Natural killer cell (primary cell): ENCODE measurements at regions of chr12 and their contacts with region 1.

Region 1: DNA sequence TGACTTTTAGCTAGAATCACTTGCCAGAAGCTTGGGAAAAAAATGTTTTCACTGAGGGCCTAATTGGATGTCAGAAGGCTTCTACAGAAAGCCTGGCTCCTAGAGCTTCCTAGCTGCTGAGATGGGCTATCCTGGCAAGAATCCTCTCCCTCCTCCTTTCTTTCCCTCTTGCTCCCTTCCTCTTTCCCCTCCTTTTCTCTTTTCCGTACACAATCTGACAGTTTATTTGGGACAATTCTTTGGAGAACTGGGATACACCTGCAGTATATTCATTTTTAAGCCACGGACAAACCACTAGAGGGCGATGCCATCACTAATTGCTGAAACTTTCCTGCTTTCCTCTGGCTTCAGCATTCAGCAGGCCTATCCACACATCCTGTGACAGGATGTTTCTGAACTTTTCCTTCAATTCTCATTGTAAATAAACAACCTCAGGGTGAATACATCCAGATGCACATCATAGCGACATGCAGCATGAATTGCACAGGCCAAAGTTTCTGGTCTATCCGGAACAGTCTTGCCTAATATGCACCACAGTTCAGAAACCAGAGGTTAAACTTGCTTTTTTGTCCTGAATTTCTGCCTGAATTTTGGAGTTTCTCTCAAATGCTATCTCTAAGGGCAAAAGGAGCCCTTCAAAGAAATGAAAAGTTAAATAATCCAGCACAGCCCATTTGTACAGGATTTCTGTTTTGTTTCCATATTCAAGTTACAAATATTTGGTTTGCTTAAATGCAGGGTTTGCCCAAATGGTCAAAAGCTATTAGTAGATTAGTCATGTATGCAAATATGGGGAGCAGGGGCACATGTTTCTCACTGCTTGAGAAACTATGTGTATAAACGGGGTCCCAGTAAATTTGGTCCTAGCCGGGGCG is 142.8 kb downstream of the PAWR start:
- DNase-seq: peak in 1 of 2 donors; percentile 36
- ATAC-seq: no peak
- H3K4me3 ChIP-seq: no peak overlapping the region
- H3K4me3 Mint-ChIP-seq: no peak overlapping the region
- H3K27ac ChIP-seq: no peak overlapping the region
- H3K27ac Mint-ChIP-seq: no peak overlapping the region
- H3K4me1 ChIP-seq: no peaks in the 10 kb centered on the region
- H3K4me1 Mint-ChIP-seq: no peaks in the 10 kb centered on the region
- H3K27me3 ChIP-seq: no peaks in the 10 kb centered on the region
- H3K27me3 Mint-ChIP-seq: peaks cover 0 to 2% of the 10 kb centered on the region in 2 donors
- CTCF ChIP-seq: peak; percentile 50

Region 2: DNA sequence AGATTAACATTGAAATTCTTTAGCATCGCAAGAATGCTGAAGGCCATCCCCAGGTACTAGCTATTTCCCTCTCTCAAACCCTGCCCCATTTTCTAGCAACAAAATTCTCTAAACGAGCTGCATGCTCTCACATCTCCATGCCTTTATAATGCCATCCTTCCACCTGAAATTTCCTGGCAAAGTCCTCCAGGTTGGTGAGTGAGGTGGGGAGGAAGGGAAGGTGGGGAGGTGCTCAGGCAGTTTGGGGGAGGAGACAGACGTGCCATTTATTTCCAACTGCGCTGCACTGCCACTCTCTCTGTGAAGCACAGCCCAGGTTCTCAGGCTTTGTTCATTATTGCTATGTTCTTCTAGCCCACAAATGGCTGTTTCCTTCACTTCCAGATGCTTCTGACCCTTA is 65.6 kb before region 1 on chr12:
- intact Hi-C with region 1: no loop called
- DNase-seq: no peak
- ATAC-seq: no peak
- H3K4me3 ChIP-seq: no peak overlapping the region
- H3K4me3 Mint-ChIP-seq: no peak overlapping the region
- H3K27ac ChIP-seq: no peak overlapping the region
- H3K27ac Mint-ChIP-seq: no peak overlapping the region
- H3K4me1 ChIP-seq: no peaks in the 10 kb centered on the region
- H3K4me1 Mint-ChIP-seq: no peaks in the 10 kb centered on the region
- H3K27me3 ChIP-seq: no peaks in the 10 kb centered on the region
- H3K27me3 Mint-ChIP-seq: no peaks in the 10 kb centered on the region
- CTCF ChIP-seq: no peak

Region 3: GRCh38 chr12:79674629-79675028 is 126.7 kb after region 1 on chr12:
- intact Hi-C with region 1: no loop called
- DNase-seq: no peak
- ATAC-seq: no peak
- H3K4me3 ChIP-seq: no peak overlapping the region
- H3K4me3 Mint-ChIP-seq: no peak overlapping the region
- H3K27ac ChIP-seq: no peak overlapping the region
- H3K27ac Mint-ChIP-seq: no peak overlapping the region
- H3K4me1 ChIP-seq: no peaks in the 10 kb centered on the region
- H3K4me1 Mint-ChIP-seq: no peaks in the 10 kb centered on the region
- H3K27me3 ChIP-seq: no peaks in the 10 kb centered on the region
- H3K27me3 Mint-ChIP-seq: peaks cover 0 to 12% of the 10 kb centered on the region in 2 donors
- CTCF ChIP-seq: no peak

Region 4: DNA sequence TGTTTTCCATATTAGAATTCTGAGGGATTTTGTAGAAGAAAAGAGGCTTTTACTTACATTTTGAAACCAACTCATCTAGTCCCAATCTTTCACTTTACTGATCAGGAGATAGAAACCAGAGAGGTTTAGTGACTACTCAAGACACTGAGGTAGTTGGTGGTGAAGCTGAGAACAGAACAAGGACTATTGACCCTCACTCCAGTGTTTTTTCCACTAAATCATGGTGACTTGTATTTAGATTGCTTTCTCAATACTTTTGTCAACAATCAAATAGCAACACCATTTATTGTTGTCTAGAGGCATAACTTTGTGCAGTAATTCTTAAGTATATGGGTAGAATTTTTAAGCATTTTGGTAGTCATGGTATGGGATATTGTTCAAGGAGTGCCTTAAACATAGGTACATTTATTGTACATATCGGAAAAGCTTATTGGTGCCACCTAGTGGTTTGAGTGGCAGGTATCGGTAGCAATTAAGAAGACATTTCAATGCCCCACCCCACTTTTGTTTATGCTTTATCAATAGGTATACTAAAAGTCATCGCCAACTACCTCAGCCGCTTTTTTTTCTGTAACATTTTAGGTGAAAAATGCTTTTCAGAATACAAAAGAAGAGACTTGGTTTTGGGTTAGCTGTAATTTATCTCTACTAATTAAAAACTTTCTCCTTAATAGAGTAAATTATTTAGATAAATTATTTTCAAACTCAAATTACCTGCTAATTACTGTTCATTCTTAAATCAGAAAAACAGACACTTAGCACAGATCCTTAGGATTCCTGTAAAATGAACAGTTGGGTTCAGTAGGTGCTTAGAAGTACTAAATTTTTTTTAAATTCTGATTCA is 190.1 kb after region 1 on chr12:
- intact Hi-C with region 1: loop called (anchors 5 kb)
- DNase-seq: peak in 1 of 2 donors; percentile 62
- ATAC-seq: peak in 1 of 3 donors; percentile 52
- H3K4me3 ChIP-seq: no peak overlapping the region
- H3K4me3 Mint-ChIP-seq: no peak overlapping the region
- H3K27ac ChIP-seq: no peak overlapping the region
- H3K27ac Mint-ChIP-seq: no peak overlapping the region
- H3K4me1 ChIP-seq: no peaks in the 10 kb centered on the region
- H3K4me1 Mint-ChIP-seq: no peaks in the 10 kb centered on the region
- H3K27me3 ChIP-seq: peaks cover 4% of the 10 kb centered on the region
- H3K27me3 Mint-ChIP-seq: peaks cover 0 to 17% of the 10 kb centered on the region in 2 donors
- CTCF ChIP-seq: peak; percentile 51

Region 5: GRCh38 chr12:80269803-80270552 is 722.0 kb after region 1 on chr12:
- intact Hi-C with region 1: loop called (anchors 5 kb)
- DNase-seq: peak in 1 of 2 donors; percentile 43
- ATAC-seq: peak in 1 of 3 donors; percentile 57
- H3K4me3 ChIP-seq: no peak overlapping the region
- H3K4me3 Mint-ChIP-seq: no peak overlapping the region
- H3K27ac ChIP-seq: no peak overlapping the region
- H3K27ac Mint-ChIP-seq: no peak overlapping the region
- H3K4me1 ChIP-seq: peaks cover 2% of the 10 kb centered on the region
- H3K4me1 Mint-ChIP-seq: peaks cover 16% of the 10 kb centered on the region in 2 donors
- H3K27me3 ChIP-seq: no peaks in the 10 kb centered on the region
- H3K27me3 Mint-ChIP-seq: peaks cover 0 to 3% of the 10 kb centered on the region in 2 donors
- CTCF ChIP-seq: peak; percentile 80